CD4-positive, alpha-beta memory T cell (primary cell): ENCODE measurements at regions of chr3 and their contacts with region 1.

Region 1: GRCh38 chr3:15815696-15816095 is 17.9 kb upstream of the ANKRD28 start:
- DNase-seq: peak in 3 of 5 donors; percentile 34 to 42 (median 36)
- H3K4me3 ChIP-seq: no peak overlapping the region
- H3K4me3 Mint-ChIP-seq: no peak overlapping the region
- H3K27ac ChIP-seq: no peak overlapping the region
- H3K27ac Mint-ChIP-seq: no peak overlapping the region
- H3K4me1 ChIP-seq: peaks cover 29% of the 10 kb centered on the region
- H3K4me1 Mint-ChIP-seq: peaks cover 22 to 55% (median 27%) of the 10 kb centered on the region in 4 donors
- H3K27me3 ChIP-seq: no peaks in the 10 kb centered on the region
- H3K27me3 Mint-ChIP-seq: no peaks in the 10 kb centered on the region

Region 2: GRCh38 chr3:15693355-15693754 is 122.3 kb before region 1 on chr3:
- CTCF ChIA-PET with region 1: no interaction called
- POLR2A ChIA-PET with region 1: no interaction called
- intact Hi-C with region 1: loop called (anchors 5 kb)
- DNase-seq: no peak
- H3K4me3 ChIP-seq: no peak overlapping the region
- H3K4me3 Mint-ChIP-seq: no peak overlapping the region
- H3K27ac ChIP-seq: no peak overlapping the region
- H3K27ac Mint-ChIP-seq: peak overlapping the region in 1 of 7 donors; percentile 17
- H3K4me1 ChIP-seq: no peaks in the 10 kb centered on the region
- H3K4me1 Mint-ChIP-seq: peaks cover 0 to 12% (median 4%) of the 10 kb centered on the region in 4 donors
- H3K27me3 ChIP-seq: no peaks in the 10 kb centered on the region
- H3K27me3 Mint-ChIP-seq: no peaks in the 10 kb centered on the region

Region 3: GRCh38 chr3:15953841-15954240 is 138.1 kb after region 1 on chr3:
- CTCF ChIA-PET with region 1: no interaction called
- POLR2A ChIA-PET with region 1: no interaction called
- intact Hi-C with region 1: loop called (anchors 5 kb)
- DNase-seq: peak in 3 of 5 donors; percentile 1 to 7 (median 2)
- H3K4me3 ChIP-seq: no peak overlapping the region
- H3K4me3 Mint-ChIP-seq: no peak overlapping the region
- H3K27ac ChIP-seq: no peak overlapping the region
- H3K27ac Mint-ChIP-seq: no peak overlapping the region
- H3K4me1 ChIP-seq: no peaks in the 10 kb centered on the region
- H3K4me1 Mint-ChIP-seq: no peaks in the 10 kb centered on the region
- H3K27me3 ChIP-seq: peaks cover 4% of the 10 kb centered on the region
- H3K27me3 Mint-ChIP-seq: no peaks in the 10 kb centered on the region

Region 4: DNA sequence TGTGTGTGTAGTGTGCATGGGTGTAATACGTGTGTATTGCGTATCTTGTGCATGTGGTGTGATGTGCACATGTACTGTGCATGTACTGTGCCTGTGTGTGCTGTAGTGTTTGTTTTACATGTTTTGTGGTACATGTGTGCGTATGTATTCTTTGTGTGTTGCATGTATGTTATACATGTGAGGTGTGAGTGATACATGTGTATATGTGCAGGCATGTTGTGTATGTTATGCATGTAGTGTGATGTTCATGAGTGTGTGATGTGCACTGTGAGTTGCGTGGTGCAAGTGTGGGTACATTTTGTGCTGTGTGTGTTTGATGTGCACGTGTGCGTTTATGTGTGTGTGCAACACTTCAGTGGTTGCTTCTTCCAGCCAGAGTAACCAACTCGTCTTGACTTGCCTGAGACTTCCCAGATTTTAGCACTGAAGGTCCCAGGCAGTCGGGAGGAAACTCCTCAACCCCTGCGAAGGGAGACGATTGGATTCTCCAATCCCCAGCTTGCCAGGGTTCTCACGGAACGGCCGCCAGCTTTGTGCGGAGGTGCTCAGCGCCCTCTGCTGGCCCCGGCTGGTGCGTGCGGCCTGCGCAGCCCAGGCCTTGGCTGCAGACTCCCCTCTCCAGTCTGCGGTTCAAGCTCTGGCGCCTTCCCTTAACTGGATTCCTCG is 362.4 kb after region 1 on chr3:
- CTCF ChIA-PET with region 1: interaction called, 7 read pairs
- POLR2A ChIA-PET with region 1: no interaction called
- intact Hi-C with region 1: loop called (anchors 1 kb)
- DNase-seq: peak in 4 of 5 donors; percentile 35 to 51 (median 40)
- H3K4me3 ChIP-seq: no peak overlapping the region
- H3K4me3 Mint-ChIP-seq: peak overlapping the region in 1 of 8 donors; percentile 10
- H3K27ac ChIP-seq: no peak overlapping the region
- H3K27ac Mint-ChIP-seq: peak overlapping the region in 1 of 7 donors; percentile 38
- H3K4me1 ChIP-seq: no peaks in the 10 kb centered on the region
- H3K4me1 Mint-ChIP-seq: peaks cover 4 to 8% (median 6%) of the 10 kb centered on the region in 4 donors
- H3K27me3 ChIP-seq: no peaks in the 10 kb centered on the region
- H3K27me3 Mint-ChIP-seq: peaks cover 12 to 16% of the 10 kb centered on the region in 2 donors

Region 5: GRCh38 chr3:16277471-16277870 is 461.8 kb after region 1 on chr3:
- CTCF ChIA-PET with region 1: no interaction called
- POLR2A ChIA-PET with region 1: no interaction called
- intact Hi-C with region 1: no loop called
- DNase-seq: no peak
- H3K4me3 ChIP-seq: no peak overlapping the region
- H3K4me3 Mint-ChIP-seq: no peak overlapping the region
- H3K27ac ChIP-seq: no peak overlapping the region
- H3K27ac Mint-ChIP-seq: peak overlapping the region in 2 of 7 donors; percentile 1 to 40
- H3K4me1 ChIP-seq: no peaks in the 10 kb centered on the region
- H3K4me1 Mint-ChIP-seq: peaks cover 0 to 6% (median 2%) of the 10 kb centered on the region in 4 donors
- H3K27me3 ChIP-seq: no peaks in the 10 kb centered on the region
- H3K27me3 Mint-ChIP-seq: no peaks in the 10 kb centered on the region

Region 6: GRCh38 chr3:16550676-16551341 is 735.1 kb after region 1 on chr3:
- CTCF ChIA-PET with region 1: no interaction called
- POLR2A ChIA-PET with region 1: no interaction called
- intact Hi-C with region 1: loop called (anchors 5 kb)
- DNase-seq: peak; percentile 74 to 80 (median 78)
- H3K4me3 ChIP-seq: no peak overlapping the region
- H3K4me3 Mint-ChIP-seq: no peak overlapping the region
- H3K27ac ChIP-seq: no peak overlapping the region
- H3K27ac Mint-ChIP-seq: peak overlapping the region in 5 of 7 donors; percentile 11 to 84 (median 51)
- H3K4me1 ChIP-seq: no peaks in the 10 kb centered on the region
- H3K4me1 Mint-ChIP-seq: peaks cover 2 to 6% (median 3%) of the 10 kb centered on the region in 4 donors
- H3K27me3 ChIP-seq: no peaks in the 10 kb centered on the region
- H3K27me3 Mint-ChIP-seq: peaks cover 6 to 14% of the 10 kb centered on the region in 2 donors

Region 7: GRCh38 chr3:17290894-17291293 is 1475.2 kb after region 1 on chr3:
- CTCF ChIA-PET with region 1: no interaction called
- POLR2A ChIA-PET with region 1: no interaction called
- intact Hi-C with region 1: no loop called
- DNase-seq: no peak
- H3K4me3 ChIP-seq: no peak overlapping the region
- H3K4me3 Mint-ChIP-seq: no peak overlapping the region
- H3K27ac ChIP-seq: no peak overlapping the region
- H3K27ac Mint-ChIP-seq: no peak overlapping the region
- H3K4me1 ChIP-seq: no peaks in the 10 kb centered on the region
- H3K4me1 Mint-ChIP-seq: peaks cover 0 to 3% (median 0%) of the 10 kb centered on the region in 4 donors
- H3K27me3 ChIP-seq: no peaks in the 10 kb centered on the region
- H3K27me3 Mint-ChIP-seq: no peaks in the 10 kb centered on the region